PC-3 (cell line): ENCODE measurements at regions of chr7 and their contacts with region 1.

Region 1: DNA sequence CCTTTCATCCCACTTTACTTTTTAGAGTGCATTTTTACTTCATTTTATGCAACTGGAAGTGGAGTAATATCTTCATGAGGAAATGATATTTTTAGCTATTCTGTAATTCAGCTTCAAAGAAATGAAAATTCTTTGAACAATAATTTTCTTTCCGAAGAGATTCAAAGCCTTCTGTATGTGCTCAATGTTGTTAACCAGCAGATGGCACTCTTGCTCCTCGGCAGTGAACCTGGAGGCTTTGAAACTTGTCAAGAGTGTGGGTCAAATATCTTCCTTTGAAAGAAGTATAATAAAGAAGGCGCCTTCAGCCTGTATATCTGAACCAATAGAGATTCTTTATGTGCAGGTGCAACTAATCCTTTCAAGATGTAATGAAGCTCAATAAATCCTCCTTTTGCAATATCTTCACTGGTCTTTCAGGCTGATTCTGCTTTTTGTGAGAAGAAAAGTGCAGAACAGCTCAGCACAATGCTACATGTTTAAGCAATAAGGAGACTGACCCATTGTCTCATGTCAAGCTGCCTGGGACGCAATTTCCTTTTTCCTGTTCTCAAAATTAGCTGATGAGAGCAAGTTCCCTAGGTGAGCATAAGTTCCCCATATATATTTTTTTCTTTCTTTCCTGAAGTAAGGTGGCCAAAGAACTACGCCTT is 258.4 kb downstream of the SEMA3A start:
- DNase-seq: peak; percentile 76
- ATAC-seq: peak; percentile 91
- H3K4me3 ChIP-seq: no peak overlapping the region
- H3K27ac ChIP-seq: no peak overlapping the region
- H3K4me1 ChIP-seq: no peaks in the 10 kb centered on the region
- H3K27me3 ChIP-seq: no peaks in the 10 kb centered on the region
- CTCF ChIP-seq: peak; percentile 93

Region 2: DNA sequence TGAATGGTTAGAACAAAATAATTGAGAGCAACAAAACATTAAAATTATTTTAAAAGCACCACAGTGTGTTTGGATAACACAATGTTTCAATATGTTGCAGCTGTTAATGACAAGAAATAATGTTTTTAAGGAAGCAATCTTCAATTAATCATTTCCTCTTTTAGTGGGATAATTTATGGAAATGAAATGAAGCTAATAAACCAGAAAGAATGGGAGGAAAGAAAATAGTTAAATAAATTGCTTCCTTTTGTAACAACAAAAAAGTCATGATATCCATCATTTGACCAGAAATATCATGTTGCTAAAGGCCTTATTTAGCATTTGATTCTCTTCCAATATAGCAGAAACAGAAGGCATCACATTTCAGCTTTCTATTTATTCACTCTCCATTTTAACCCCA is 33.9 kb after region 1 on chr7:
- CTCF ChIA-PET with region 1: no interaction called
- POLR2A ChIA-PET with region 1: no interaction called
- intact Hi-C with region 1: loop called (anchors 5 kb)
- DNase-seq: no peak
- ATAC-seq: no peak
- H3K4me3 ChIP-seq: no peak overlapping the region
- H3K27ac ChIP-seq: no peak overlapping the region
- H3K4me1 ChIP-seq: no peaks in the 10 kb centered on the region; the same call in 1 of the 2 replicates
- H3K27me3 ChIP-seq: no peaks in the 10 kb centered on the region
- CTCF ChIP-seq: no peak

Region 3: DNA sequence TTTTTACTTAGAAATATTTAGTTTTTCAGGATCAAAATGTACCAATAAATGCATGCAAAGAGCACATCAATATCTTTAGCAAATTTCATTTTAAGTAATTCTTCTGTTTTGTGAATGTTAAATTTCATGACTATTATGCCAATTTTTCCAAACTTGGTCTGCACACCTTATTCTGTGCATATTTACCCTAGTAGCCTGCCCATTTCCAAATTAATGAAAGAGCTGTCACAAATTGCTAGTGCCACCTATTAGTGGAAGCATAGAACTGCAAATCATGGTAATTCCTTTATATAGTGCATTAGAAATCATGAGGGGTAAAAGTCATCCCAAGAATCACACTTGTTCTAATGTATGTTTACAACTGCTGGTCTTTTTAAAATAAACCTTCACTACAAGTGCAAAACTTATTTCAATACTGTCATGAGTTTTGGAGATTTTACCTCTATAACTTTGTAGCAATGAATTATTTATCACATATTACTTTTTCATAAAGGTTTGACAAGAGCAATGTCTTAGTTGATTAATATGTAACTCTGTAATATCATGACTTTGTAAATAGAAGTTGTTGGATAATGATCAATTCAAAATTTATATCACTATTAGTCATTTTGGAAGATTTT is 252.7 kb after region 1 on chr7:
- CTCF ChIA-PET with region 1: interaction called, 3 read pairs
- POLR2A ChIA-PET with region 1: no interaction called
- intact Hi-C with region 1: loop called (anchors 1 kb)
- DNase-seq: peak; percentile 63
- ATAC-seq: peak; percentile 16; the same call in 1 of the 2 replicates
- H3K4me3 ChIP-seq: peak overlapping the region; percentile 55
- H3K27ac ChIP-seq: peak overlapping the region; percentile 94
- H3K4me1 ChIP-seq: peaks cover 56% of the 10 kb centered on the region
- H3K27me3 ChIP-seq: no peaks in the 10 kb centered on the region
- CTCF ChIP-seq: peak; percentile 80

Region 4: DNA sequence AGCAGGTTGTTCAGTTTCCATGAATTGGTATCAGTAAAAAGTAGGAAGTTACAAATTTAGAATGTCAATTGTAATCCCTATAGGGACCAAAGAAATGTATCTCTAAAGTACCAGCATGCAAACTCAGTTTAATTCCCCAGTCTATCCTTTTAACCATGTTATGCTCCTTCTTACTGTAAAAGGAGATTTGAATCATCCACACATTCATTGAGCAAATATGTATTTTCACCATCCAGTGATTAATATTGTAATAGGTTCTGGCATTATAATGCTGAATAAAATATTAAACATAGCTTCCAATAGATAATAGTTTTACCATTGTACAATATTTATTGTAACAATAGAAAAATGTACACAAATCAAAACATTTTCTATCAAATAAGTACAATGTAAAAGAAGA is 486.6 kb after region 1 on chr7:
- CTCF ChIA-PET with region 1: no interaction called
- POLR2A ChIA-PET with region 1: no interaction called
- intact Hi-C with region 1: no loop called
- DNase-seq: peak; percentile 31
- ATAC-seq: no peak
- H3K4me3 ChIP-seq: no peak overlapping the region
- H3K27ac ChIP-seq: no peak overlapping the region
- H3K4me1 ChIP-seq: no peaks in the 10 kb centered on the region
- H3K27me3 ChIP-seq: no peaks in the 10 kb centered on the region
- CTCF ChIP-seq: no peak

Region 5: DNA sequence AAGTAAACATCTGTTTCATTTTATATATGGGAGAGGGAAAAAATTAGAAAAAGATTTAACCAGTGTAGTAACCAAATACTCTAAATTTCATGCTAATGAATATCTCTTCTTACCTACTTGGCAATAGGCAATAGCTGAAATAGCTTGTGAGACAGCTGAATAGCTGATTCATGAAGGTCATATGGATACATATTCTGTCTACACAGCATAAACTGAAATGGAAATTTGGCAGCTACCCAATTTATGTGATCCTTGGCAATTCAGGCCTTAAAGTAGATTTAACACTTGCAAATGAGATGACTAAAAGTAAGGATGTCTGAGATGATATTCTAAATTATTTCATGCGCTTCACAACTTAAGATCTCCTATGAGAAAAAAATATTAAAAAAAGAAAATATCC is 519.6 kb after region 1 on chr7:
- CTCF ChIA-PET with region 1: no interaction called
- POLR2A ChIA-PET with region 1: no interaction called
- intact Hi-C with region 1: loop called (anchors 5 kb)
- DNase-seq: peak; percentile 22
- ATAC-seq: no peak
- H3K4me3 ChIP-seq: no peak overlapping the region
- H3K27ac ChIP-seq: no peak overlapping the region
- H3K4me1 ChIP-seq: peaks cover 16% of the 10 kb centered on the region
- H3K27me3 ChIP-seq: no peaks in the 10 kb centered on the region
- CTCF ChIP-seq: no peak

Region 6: GRCh38 chr7:84614821-84615505 is 678.8 kb after region 1 on chr7:
- CTCF ChIA-PET with region 1: no interaction called
- POLR2A ChIA-PET with region 1: no interaction called
- intact Hi-C with region 1: loop called (anchors 10 kb)
- DNase-seq: peak; percentile 31
- ATAC-seq: no peak
- H3K4me3 ChIP-seq: no peak overlapping the region
- H3K27ac ChIP-seq: no peak overlapping the region
- H3K4me1 ChIP-seq: peaks cover 8% of the 10 kb centered on the region
- H3K27me3 ChIP-seq: no peaks in the 10 kb centered on the region
- CTCF ChIP-seq: peak; percentile 44

Region 7: DNA sequence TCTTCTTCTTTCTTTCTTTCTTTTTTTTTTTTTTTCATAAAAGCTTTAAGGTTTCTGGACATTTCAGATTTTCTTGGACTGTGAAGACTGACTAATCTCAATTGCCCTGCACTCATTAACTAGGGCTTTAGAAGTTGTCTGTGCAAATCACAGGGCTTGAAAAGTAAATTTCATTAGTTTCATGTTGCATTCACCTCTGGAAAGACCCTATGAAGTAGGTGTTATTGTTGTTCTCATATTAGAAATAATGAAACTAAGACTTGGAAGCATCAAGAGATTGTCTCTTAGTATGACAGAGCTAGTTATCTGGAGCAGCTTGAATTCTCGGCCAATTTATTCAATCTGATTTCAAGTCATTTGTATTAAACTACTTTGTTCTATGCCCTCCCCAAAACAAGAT is 1278.9 kb after region 1 on chr7:
- CTCF ChIA-PET with region 1: interaction called, 10 read pairs
- POLR2A ChIA-PET with region 1: no interaction called
- intact Hi-C with region 1: no loop called
- DNase-seq: no peak
- ATAC-seq: no peak
- H3K4me3 ChIP-seq: no peak overlapping the region
- H3K27ac ChIP-seq: no peak overlapping the region
- H3K4me1 ChIP-seq: no peaks in the 10 kb centered on the region
- H3K27me3 ChIP-seq: no peaks in the 10 kb centered on the region
- CTCF ChIP-seq: no peak

Region 8: GRCh38 chr7:85851571-85852193 is 1915.5 kb after region 1 on chr7:
- CTCF ChIA-PET with region 1: no interaction called
- POLR2A ChIA-PET with region 1: no interaction called
- intact Hi-C with region 1: loop called (anchors 5 kb)
- DNase-seq: peak; percentile 51
- ATAC-seq: peak; percentile 50; the same call in 1 of the 2 replicates
- H3K4me3 ChIP-seq: no peak overlapping the region
- H3K27ac ChIP-seq: no peak overlapping the region
- H3K4me1 ChIP-seq: no peaks in the 10 kb centered on the region
- H3K27me3 ChIP-seq: 0 out of 2 replicates have a peak, but pooled peaks cover 2% of the 10 kb centered on the region
- CTCF ChIP-seq: peak; percentile 66